Left cardiac atrium (tissue), 4 donors: ENCODE measurements at regions of chr15 and their contacts with region 1.

Region 1: GRCh38 chr15:70488002-70488605 is 275.3 kb downstream of the UACA start:
- DNase-seq: peak; percentile 64
- ATAC-seq: peak; percentile 53 to 54

Region 2: DNA sequence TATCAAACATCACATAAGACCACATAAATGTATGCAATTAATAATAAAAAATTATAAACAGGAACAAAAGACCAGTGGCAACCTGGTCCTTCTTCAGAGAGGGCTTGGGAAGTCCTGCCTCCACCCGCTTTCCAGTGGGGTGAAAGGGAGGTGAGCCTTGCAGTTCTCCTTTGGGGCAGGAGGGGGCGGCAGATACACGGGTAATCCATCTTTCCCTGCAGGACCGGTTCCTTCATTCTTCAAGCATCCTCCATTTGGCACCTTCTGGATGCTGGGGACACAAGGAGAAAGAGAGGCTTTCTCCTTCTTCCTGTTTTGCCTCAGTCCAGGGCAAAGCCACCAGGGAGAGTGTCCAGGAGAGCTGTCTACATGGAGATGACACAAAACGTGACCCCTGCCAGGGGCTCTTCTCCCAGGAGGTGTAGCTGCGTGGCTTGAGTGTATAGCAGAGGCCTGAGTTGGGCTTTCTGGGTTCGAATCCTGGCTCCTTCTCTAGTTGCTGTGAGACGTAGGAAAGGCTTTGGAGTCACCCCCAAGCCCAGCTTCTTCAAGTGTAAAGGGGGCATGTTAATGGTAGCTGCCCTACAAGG is 1012.2 kb before region 1 on chr15:
- intact Hi-C with region 1: loop called (anchors 2 to 5 kb)
- DNase-seq: peak; percentile 75
- ATAC-seq: peak; percentile 86 to 87

Region 3: DNA sequence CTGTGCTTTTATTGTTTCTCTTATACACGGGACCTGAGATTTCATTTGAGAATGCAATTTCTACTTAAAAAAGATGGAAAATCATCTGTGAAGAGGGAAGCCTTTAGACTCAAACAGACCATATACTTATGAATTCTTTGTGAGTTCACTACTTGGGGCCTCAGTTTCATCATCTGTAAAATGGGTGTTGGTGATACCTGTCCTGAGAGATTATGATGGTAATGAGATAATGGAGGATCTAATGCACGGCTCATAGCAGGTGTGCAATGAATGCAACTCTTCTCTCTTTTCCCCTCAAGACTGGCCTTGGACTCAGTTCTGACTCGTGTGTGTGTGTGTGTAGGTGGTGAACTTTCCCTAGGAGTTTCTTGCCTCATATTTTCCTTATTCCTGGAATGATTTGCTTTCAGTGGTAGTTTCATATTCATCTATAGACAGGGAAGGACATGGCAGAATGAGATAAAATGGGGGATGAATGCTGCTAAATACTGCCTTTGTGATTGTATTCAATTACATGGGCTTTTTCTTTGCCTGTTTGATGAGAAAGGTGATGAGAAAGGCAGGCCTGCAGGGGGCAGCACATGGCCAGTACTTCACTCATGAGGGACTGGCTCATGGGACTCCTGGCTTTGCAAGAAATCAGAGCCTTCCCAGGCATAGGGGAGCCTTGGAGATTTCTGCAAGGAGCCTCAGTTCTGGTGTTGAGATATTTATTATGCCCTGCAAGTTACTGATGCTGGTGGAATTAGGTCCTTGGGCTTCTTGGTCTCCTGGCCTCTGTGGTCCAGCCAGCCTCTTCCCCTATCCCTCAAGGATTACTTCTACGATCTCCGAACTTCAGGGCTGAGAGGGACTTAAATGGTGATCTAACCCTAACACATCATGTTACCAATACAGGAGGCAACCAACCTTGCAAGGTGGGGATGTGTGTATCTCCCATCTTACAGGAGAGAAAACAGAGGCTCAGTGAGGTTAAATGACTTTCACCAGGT is 964.8 kb before region 1 on chr15:
- intact Hi-C with region 1: loop called in 1 of 2 experiments (anchors 5 kb)
- DNase-seq: peak; percentile 68
- ATAC-seq: peak; percentile 79 to 87

Region 4: GRCh38 chr15:69729161-69729748 is 758.8 kb before region 1 on chr15:
- intact Hi-C with region 1: loop called in 1 of 2 experiments (anchors 5 kb)
- DNase-seq: no peak
- ATAC-seq: no peak

Region 5: DNA sequence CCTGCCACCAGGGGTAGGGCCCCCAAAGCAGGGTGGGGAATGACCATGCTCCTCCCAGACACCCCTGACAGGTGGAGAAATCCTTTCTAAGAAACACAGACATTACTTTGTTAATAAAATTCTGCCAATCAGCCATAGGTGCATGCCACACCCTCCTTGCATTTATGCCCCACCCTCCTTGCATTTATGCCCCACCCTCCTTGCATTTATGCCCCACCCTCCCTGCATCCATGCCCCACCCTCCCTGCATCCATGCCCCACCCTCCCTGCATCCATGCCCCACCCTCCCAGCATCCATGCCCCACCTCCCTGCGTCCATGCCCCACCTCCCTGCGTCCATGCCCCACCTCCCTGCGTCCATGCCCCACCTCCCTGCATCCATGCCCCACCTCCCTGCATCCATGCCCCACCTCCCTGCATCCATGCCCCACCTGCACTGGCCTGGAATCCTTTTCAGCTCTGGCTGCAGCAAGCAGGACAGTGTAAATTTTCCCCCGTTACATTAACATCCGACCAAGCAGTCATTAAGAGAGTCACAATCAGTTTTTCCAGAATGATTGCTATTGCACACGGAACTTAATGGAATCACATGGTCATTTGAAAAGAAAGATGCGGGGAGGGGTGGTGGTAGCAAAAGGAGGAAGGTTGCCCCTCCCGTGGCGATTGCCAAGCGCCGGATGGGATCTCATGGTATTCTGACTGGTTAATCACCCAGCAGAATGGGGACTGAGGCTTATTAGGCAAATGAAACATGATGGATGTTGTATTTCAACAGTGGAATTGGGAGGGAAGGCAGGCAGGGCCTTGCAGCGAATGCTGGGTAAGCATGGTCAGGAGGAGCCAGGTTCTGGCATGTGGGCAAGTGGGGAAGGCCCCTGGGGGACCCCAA is 481.6 kb before region 1 on chr15:
- intact Hi-C with region 1: no loop called
- DNase-seq: no peak
- ATAC-seq: no peak